Endothelial cell of umbilical vein (primary cell): ENCODE measurements at regions of chr2 and their contacts with region 1.

Region 1: GRCh38 chr2:58762176-58762781 is 521.2 kb upstream of the FANCL start:
- DNase-seq: peak; percentile 40
- H3K4me3 ChIP-seq: no peak overlapping the region
- H3K27ac ChIP-seq: no peak overlapping the region
- H3K4me1 ChIP-seq: no peaks in the 10 kb centered on the region
- H3K27me3 ChIP-seq: peaks cover 0 to 2% of the 10 kb centered on the region in 2 experiments
- CTCF ChIP-seq: peak; percentile 54 to 58
- POLR2A ChIP-seq: no peak

Region 2: DNA sequence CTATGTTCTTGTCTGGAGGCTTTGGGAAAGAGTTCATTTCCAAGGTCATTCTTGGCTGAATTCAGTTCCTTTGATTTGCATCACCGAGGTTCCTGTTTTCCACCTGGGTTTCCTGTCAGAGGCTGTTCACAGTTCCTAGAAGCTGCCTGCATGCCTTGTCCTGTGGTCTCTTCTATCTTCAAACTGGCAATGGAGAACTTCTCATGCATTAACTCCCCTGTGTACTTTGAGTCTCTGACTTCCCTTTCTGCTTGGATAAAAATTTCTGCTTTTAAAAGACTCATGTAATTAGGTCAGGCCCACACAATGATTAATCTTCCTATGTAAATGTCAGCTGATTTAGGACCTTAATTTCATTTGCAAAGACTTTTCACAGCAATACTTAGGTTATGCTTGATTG is 21.9 kb before region 1 on chr2:
- CTCF ChIA-PET with region 1: interaction called, 11 read pairs
- POLR2A ChIA-PET with region 1: no interaction called
- dilution Hi-C with region 1: no loop called
- intact Hi-C with region 1: no loop called
- DNase-seq: no peak
- H3K4me3 ChIP-seq: no peak overlapping the region
- H3K27ac ChIP-seq: no peak overlapping the region
- H3K4me1 ChIP-seq: no peaks in the 10 kb centered on the region
- H3K27me3 ChIP-seq: no peaks in the 10 kb centered on the region
- CTCF ChIP-seq: no peak
- POLR2A ChIP-seq: no peak

Region 3: GRCh38 chr2:59282374-59283057 is 520.2 kb after region 1 on chr2:
- CTCF ChIA-PET with region 1: no interaction called
- POLR2A ChIA-PET with region 1: no interaction called
- dilution Hi-C with region 1: no loop called
- intact Hi-C with region 1: no loop called
- DNase-seq: no peak
- H3K4me3 ChIP-seq: no peak overlapping the region
- H3K27ac ChIP-seq: no peak overlapping the region
- H3K4me1 ChIP-seq: no peaks in the 10 kb centered on the region
- H3K27me3 ChIP-seq: no peaks in the 10 kb centered on the region
- CTCF ChIP-seq: no peak
- POLR2A ChIP-seq: no peak

Region 4: GRCh38 chr2:60550178-60550983 is 1788.1 kb after region 1 on chr2:
- CTCF ChIA-PET with region 1: interaction called, 9 read pairs
- POLR2A ChIA-PET with region 1: no interaction called
- dilution Hi-C with region 1: no loop called
- intact Hi-C with region 1: loop called (anchors 1 kb)
- DNase-seq: peak; percentile 52
- H3K4me3 ChIP-seq: peak overlapping the region; percentile 44 to 67 (median 60)
- H3K27ac ChIP-seq: no peak overlapping the region
- H3K4me1 ChIP-seq: peaks cover 22% of the 10 kb centered on the region
- H3K27me3 ChIP-seq: peaks cover 40 to 68% of the 10 kb centered on the region in 2 experiments
- CTCF ChIP-seq: peak; percentile 39 to 61
- POLR2A ChIP-seq: no peak

Region 5: GRCh38 chr2:60641811-60642788 is 1879.8 kb after region 1 on chr2:
- CTCF ChIA-PET with region 1: interaction called, 4 read pairs
- POLR2A ChIA-PET with region 1: no interaction called
- dilution Hi-C with region 1: no loop called
- intact Hi-C with region 1: loop called (anchors 2 kb)
- DNase-seq: peak; percentile 32
- H3K4me3 ChIP-seq: no peak overlapping the region
- H3K27ac ChIP-seq: no peak overlapping the region
- H3K4me1 ChIP-seq: no peaks in the 10 kb centered on the region
- H3K27me3 ChIP-seq: no peaks in the 10 kb centered on the region
- CTCF ChIP-seq: peak; percentile 65 to 66
- POLR2A ChIP-seq: no peak